Dorsolateral prefrontal cortex (tissue), 120 donors: ENCODE measurements at regions of chr3 and their contacts with region 1.

Region 1: GRCh38 chr3:52555056-52555455 is 18.7 kb downstream of the UQCC5 start:
- DNase-seq: no peak
- H3K4me3 ChIP-seq: no peak overlapping the region
- H3K27ac ChIP-seq: peak overlapping the region in 4 of 59 donors; percentile 19 to 70 (median 28)
- H3K27me3 ChIP-seq: no peaks in the 10 kb centered on the region
- CTCF ChIP-seq: no peak

Region 2: DNA sequence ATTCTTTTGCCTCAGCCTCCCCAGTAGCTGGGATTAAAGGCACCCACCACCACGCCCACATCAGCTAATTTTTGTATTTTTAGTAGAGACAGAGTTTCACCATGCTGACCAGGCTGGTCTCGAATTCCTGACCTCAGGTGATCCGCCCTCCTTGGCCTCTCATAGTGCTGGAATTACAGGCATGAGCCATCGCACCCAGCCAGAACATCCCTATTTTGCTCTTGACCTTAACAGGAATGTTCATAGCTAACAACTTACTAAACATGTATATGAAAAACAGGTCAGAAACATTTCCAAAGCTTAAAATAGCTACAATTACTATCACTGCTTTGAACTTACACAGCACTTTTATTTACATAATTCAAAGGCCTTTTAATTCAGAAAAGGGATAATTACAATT is 15.0 kb after region 1 on chr3:
- intact Hi-C with region 1: no loop called
- DNase-seq: no peak
- H3K4me3 ChIP-seq: no peak overlapping the region
- H3K27ac ChIP-seq: no peak overlapping the region
- H3K27me3 ChIP-seq: no peaks in the 10 kb centered on the region
- CTCF ChIP-seq: no peak

Region 3: DNA sequence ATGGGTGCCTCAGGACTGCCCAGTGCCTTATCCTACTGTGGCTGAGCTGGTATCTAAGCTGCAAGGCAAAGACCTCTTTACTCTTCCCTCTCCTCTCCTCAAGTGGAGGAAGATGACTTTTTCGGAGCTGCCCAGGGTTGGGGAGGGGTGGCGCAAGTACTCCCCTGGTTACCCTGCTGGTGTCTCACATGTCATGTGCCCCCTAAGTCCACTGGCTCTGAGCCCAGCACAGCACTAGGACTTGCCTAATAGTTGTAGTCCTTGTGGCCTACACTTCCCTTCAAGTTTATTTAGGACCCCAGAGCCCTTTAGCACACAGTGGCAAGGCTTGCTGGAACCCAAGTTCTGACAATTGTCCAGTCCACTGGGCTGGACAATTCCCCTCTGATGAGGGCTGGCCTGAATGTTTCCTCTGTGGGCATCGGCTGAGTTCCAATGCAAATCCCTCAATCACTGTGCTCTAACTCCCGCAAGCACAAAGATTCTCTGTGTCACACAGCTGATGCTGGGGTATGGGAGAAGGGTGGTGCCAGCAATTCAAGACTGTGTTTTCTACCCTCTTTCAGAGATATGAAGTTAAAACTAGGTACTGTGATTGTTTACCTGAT is 41.7 kb after region 1 on chr3:
- intact Hi-C with region 1: loop called in 1 of 2 experiments (anchors 5 kb)
- DNase-seq: peak; percentile 19 to 87 (median 80)
- H3K4me3 ChIP-seq: peak overlapping the region in 17 of 59 donors; percentile 2 to 46 (median 16)
- H3K27ac ChIP-seq: peak overlapping the region; percentile 53 to 97 (median 91)
- H3K27me3 ChIP-seq: no peaks in the 10 kb centered on the region
- CTCF ChIP-seq: peak in 16 of 56 donors; percentile 7 to 39 (median 20)

Region 4: GRCh38 chr3:52685709-52686691 is 130.9 kb after region 1 on chr3 and contains the starts of genes GNL3 and PBRM1:
- intact Hi-C with region 1: no loop called
- DNase-seq: peak; percentile 88 to 96 (median 94)
- H3K4me3 ChIP-seq: peak within 1 kb of the TSS; percentile 65 to 98 (median 89)
- H3K27ac ChIP-seq: peak within 1 kb of the TSS; percentile 72 to 99 (median 95)
- H3K27me3 ChIP-seq: no peaks in the 10 kb centered on the region
- CTCF ChIP-seq: peak in 16 of 56 donors; percentile 6 to 40 (median 14)
- total RNA-seq, gene GNL3: 22.3 to 57.4 (median 40.7) TPM
- total RNA-seq, gene PBRM1: 41.4 to 68.2 (median 53.3) TPM